Colonic mucosa (tissue), 4 donors: ENCODE measurements at regions of chr2 and their contacts with region 1.

Region 1: DNA sequence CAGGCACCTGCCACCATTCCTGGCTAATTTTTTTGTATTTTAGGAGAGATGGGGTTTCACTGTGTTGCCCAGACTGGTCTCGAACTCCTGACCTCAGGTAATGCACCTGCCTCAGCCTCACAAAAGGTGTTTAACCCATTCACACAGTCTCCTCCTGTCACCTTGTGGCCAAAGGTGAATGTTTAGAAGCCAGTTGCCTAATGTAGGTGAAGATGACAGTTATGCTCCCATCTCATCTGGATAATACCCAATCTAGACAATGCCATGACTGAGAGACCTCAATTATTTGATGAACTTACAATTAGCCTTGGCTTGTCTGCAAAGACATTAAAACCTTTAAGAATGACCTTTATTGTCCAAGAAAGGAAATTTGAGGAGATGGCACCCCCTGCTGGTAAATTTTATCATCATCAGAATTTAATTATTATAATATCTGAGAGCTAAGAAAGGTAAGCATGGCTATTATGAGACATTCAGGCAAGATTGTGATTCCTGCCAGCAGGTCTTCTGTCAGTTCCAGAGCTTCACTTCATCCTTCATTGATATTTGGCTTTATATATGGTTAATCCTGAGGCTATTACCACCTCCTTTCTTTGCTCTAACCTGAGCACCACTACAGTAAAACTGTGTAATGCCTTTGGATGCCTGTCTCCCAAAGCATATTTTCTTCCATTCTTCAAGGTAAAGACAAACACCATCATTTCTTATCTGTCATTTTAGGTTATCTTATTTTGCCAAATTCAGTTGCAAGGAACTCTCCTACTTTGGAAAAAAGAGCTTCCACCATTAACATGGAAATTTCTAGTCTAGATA is 117.6 kb downstream of the FAM124B start:
- DNase-seq: peak; percentile 30
- H3K4me3 ChIP-seq: no peak overlapping the region
- H3K27ac ChIP-seq: no peak overlapping the region
- H3K4me1 ChIP-seq: no peaks in the 10 kb centered on the region
- H3K27me3 ChIP-seq: no peaks in the 10 kb centered on the region
- CTCF ChIP-seq: peak; percentile 59

Region 2: GRCh38 chr2:223970343-223971128 is 313.8 kb before region 1 on chr2:
- intact Hi-C with region 1: loop called (anchors 2 kb)
- DNase-seq: peak; percentile 64
- H3K4me3 ChIP-seq: no peak overlapping the region
- H3K27ac ChIP-seq: no peak overlapping the region
- H3K4me1 ChIP-seq: no peaks in the 10 kb centered on the region
- H3K27me3 ChIP-seq: no peaks in the 10 kb centered on the region
- CTCF ChIP-seq: peak; percentile 87

Region 3: DNA sequence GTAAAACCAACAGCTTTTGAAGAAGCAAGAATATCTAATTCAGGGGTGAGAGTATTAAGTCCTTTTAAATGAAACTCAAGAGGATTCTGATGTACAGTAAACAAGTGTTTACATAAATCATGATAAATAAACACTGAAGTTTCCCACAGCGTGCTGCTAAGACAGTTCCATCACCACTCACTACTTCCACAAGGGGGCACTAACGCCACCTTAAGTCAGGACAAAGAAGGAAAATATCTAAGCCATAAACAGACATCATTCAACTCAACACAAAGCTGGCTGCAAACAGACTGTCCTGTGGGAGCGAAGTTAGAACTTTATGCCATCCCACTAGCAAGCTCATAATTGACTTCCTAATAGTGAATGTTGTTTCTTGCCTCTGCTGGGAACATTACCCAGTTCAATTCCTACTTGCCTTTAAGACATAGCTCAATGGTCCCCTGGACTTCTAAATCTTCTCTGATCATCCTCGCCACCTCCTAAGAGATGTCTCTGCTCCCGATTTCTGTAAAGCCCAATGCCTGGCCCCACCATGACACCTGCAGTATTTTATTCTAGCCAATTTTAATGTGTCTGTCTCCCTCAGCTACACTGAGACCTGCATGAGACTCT is 290.6 kb before region 1 on chr2:
- intact Hi-C with region 1: loop called (anchors 2 kb)
- DNase-seq: peak; percentile 78
- H3K4me3 ChIP-seq: no peak overlapping the region
- H3K27ac ChIP-seq: no peak overlapping the region
- H3K4me1 ChIP-seq: no peaks in the 10 kb centered on the region
- H3K27me3 ChIP-seq: no peaks in the 10 kb centered on the region
- CTCF ChIP-seq: peak; percentile 75

Region 4: GRCh38 chr2:224039124-224039940 is 245.0 kb before region 1 on chr2 and contains the start of gene SERPINE2:
- intact Hi-C with region 1: loop called (anchors 5 kb)
- DNase-seq: peak; percentile 59
- H3K4me3 ChIP-seq: peak within 1 kb of the TSS; percentile 75
- H3K27ac ChIP-seq: no peak within 1 kb of the TSS
- H3K4me1 ChIP-seq: peaks cover 7% of the 10 kb centered on the region
- H3K27me3 ChIP-seq: no peaks in the 10 kb centered on the region
- CTCF ChIP-seq: peak; percentile 24
- total RNA-seq, gene SERPINE2: 13.6 to 19.2 TPM

Region 5: DNA sequence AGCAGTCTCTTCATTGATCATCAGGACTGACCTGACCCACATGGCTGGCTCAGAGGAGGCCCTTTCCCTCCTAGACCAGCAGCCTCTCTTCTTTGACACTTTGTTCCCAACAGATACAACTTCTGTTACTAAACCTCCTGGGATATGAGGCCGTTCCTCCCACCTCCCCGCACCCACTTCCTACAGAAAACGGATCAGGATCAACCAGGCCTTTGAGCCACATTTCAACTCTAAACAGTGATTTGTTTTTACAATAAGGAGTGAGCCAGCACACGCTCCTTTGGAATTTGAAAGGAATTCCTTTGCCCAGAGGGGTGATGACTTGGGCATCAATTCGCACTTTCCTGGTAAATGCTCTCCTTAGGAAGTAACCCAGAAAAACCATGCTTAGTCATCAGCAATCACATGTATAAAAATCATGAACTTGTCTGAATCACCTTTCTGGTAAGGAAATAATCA is 62.9 kb before region 1 on chr2:
- intact Hi-C with region 1: no loop called
- DNase-seq: no peak
- H3K4me3 ChIP-seq: no peak overlapping the region
- H3K27ac ChIP-seq: no peak overlapping the region
- H3K4me1 ChIP-seq: no peaks in the 10 kb centered on the region
- H3K27me3 ChIP-seq: no peaks in the 10 kb centered on the region
- CTCF ChIP-seq: no peak